ENCODE measurements at regions of chr11 and their contacts with region 1.

Region 1: DNA sequence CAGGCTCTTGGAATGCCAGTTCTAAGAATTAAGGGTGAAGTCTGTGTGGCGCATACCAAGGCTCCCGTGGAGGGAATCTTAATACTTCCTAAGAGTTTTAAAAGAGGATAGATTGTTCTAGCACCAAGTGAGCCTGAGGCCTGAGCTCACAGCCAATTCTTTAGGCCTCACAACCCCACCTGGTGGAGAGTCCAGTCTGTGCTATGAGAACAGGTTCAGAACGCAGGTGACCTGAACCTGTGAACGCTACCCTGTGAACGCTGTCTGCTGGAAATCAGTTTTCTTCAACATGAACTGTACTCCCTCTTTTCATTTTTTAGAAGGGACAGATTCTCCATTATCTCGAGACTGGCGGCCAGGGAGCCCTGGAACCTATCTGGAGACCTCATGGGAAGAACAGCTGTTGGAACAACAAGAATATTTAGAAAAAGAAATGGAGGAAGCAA is 43.2 kb upstream of the DLAT start:
- DNase-seq: peak; percentile 88 to 91
- H3K4me3 ChIP-seq: no peak overlapping the region
- H3K4me3 Mint-ChIP-seq: peak overlapping the region; percentile 53
- H3K27ac Mint-ChIP-seq: peak overlapping the region; percentile 52
- H3K4me1 ChIP-seq: peaks cover 29% of the 10 kb centered on the region
- H3K4me1 Mint-ChIP-seq: peaks cover 30% of the 10 kb centered on the region
- H3K27me3 ChIP-seq: no peaks in the 10 kb centered on the region
- H3K27me3 Mint-ChIP-seq: no peaks in the 10 kb centered on the region
- CTCF ChIP-seq: peak; percentile 95 to 99

Region 2: DNA sequence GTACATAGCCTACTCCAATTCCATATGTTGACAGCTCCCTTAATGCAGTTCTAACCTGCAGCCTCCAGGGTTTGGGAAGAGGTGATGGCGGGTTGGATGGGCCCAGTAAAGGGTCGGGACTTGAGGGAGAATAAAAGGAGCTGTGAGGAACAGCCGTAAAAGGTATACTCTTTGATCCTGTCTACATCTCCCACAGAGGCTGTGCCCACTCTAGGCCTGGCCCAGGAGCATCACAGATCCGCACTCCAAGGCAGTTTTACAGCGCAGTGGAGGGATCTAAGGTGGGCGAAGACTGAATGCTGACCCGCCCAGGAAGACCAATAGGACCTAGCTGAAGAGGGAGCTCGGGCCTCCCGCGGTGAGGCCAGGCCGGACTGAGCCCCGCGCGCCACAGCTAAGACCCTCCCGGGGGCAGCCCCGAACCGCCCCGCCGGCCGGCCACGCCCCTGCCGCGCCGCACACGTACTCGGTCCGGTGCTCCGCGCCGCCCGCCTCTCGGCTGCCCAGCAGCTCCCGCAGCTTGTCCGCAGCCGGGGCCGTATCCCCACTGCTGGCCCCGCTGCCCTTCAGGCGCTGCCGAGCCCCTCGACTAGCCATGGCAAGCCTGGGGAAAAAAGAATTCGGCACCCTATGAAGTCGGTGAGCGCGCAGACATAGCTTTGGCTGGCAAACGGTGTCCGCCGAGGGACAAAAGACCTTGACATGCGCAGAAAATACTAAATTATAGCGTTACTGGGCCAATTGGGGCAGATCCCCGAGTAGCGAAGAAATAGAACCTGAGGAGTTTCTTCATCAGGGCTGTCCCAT is 111.0 kb before region 1 on chr11 and contains the start of gene ALG9:
- CTCF ChIA-PET with region 1: interaction called, 18 read pairs
- POLR2A ChIA-PET with region 1: no interaction called
- intact Hi-C with region 1: no loop called
- DNase-seq: peak; percentile 89 to 94
- H3K4me3 ChIP-seq: peak within 1 kb of the TSS; percentile 94
- H3K4me3 Mint-ChIP-seq: peak within 1 kb of the TSS; percentile 91
- H3K27ac Mint-ChIP-seq: peak within 1 kb of the TSS; percentile 53
- H3K4me1 ChIP-seq: 0 out of 2 replicates have a peak, but pooled peaks cover 3% of the 10 kb centered on the region
- H3K4me1 Mint-ChIP-seq: peaks cover 16% of the 10 kb centered on the region
- H3K27me3 ChIP-seq: no peaks in the 10 kb centered on the region
- H3K27me3 Mint-ChIP-seq: no peaks in the 10 kb centered on the region
- CTCF ChIP-seq: peak; percentile 55 to 63
- total RNA-seq, gene ALG9: 55.3 and 57.4 TPM in 2 replicates

Region 3: DNA sequence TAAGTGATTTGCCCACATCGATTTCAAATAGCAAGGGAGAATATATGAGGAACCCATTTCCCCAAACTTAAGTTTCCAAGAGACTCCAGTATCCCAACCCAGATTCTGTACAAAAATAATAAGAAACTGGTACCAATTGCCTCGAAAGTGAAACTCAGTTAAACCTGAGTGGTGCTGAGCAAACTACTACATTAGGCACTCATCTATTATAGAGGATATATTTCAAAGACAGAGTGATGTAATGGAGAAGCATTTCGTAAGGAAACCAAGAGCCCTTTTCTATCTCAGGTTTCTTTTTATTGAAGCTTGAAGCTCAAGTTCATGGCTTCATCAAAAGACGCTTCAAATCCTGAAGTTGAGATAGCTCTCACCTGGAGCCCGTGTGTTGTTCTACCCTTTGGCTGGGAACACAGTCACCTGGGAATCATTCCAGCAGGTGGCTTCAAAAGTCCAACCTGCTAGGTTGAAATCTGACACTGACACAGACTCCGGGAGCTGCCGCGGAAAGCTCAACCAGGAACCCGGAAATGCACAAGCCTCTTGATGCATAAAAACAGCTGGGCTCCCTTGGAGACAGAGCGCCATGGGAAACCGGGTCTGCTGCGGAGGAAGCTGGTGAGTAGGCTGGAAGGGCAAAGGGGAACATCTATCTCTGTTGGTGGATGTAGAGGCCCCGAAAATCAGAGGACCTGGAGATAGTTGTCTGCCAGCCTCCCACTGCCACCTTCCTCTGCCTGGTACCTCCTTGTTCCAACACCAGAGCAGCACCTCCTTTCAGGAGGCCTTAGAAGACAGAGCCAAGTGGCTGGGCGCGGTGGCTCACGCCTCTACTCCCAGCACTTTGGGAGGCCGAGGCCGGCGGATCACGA is 63.4 kb before region 1 on chr11 and contains the start of gene C11orf52:
- CTCF ChIA-PET with region 1: interaction called, 35 read pairs
- POLR2A ChIA-PET with region 1: no interaction called
- intact Hi-C with region 1: loop called (anchors 1 kb)
- DNase-seq: peak; percentile 92 to 94
- H3K4me3 ChIP-seq: peak within 1 kb of the TSS; percentile 49
- H3K4me3 Mint-ChIP-seq: peak within 1 kb of the TSS; percentile 79
- H3K27ac Mint-ChIP-seq: peak within 1 kb of the TSS; percentile 94
- H3K4me1 ChIP-seq: peaks cover 12% of the 10 kb centered on the region
- H3K4me1 Mint-ChIP-seq: peaks cover 21% of the 10 kb centered on the region
- H3K27me3 ChIP-seq: no peaks in the 10 kb centered on the region
- H3K27me3 Mint-ChIP-seq: no peaks in the 10 kb centered on the region
- CTCF ChIP-seq: peak; percentile 42 to 48
- total RNA-seq, gene C11orf52: 14.4 and 14.8 TPM in 2 replicates

Region 4: DNA sequence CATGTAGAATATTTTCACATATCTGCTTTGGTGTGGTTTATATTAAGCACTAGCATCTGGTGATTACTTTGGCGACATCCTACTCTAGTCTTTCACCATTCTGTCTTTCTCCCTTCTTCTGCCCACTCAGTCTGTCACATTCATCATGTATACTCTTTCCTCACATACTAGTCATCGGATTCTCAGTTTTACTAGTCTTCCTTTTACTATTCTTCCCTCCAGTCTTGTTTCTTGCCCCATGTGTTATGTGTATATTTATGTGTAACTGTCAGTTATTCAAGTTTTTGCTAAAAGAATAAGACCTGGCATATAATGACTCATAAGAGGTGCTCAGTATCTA is 49.5 kb before region 1 on chr11:
- CTCF ChIA-PET with region 1: interaction called, 102 read pairs
- POLR2A ChIA-PET with region 1: interaction called, 3 read pairs
- intact Hi-C with region 1: loop called (anchors 1 kb)
- DNase-seq: no peak
- H3K4me3 ChIP-seq: no peak overlapping the region
- H3K4me3 Mint-ChIP-seq: no peak overlapping the region
- H3K27ac Mint-ChIP-seq: no peak overlapping the region
- H3K4me1 ChIP-seq: peaks cover 17% of the 10 kb centered on the region
- H3K4me1 Mint-ChIP-seq: peaks cover 15% of the 10 kb centered on the region
- H3K27me3 ChIP-seq: no peaks in the 10 kb centered on the region
- H3K27me3 Mint-ChIP-seq: no peaks in the 10 kb centered on the region
- CTCF ChIP-seq: no peak

Region 5: DNA sequence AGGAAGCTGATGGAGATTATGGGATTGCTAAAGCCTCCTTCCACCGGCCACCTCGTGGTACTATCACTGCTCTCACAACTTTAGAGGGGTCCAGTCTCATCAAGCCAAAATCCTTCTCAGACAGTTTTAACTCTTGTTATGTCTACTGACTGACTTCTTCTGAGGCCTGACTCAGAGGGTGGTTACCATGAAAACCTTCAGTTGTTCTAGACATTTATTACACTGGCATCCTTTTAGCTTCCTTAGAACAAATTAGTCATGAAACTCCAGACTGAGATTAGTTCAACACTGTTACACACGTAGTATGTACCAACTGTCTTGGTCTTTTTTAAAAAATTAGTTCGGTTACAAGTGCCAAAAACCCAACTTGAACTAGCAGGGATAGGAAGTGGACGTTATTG is 37.4 kb before region 1 on chr11:
- CTCF ChIA-PET with region 1: interaction called, 16 read pairs
- POLR2A ChIA-PET with region 1: no interaction called
- intact Hi-C with region 1: loop called (anchors 1 kb)
- DNase-seq: no peak
- H3K4me3 ChIP-seq: no peak overlapping the region
- H3K4me3 Mint-ChIP-seq: peak overlapping the region; percentile 51
- H3K27ac Mint-ChIP-seq: peak overlapping the region; percentile 57
- H3K4me1 ChIP-seq: peaks cover 13% of the 10 kb centered on the region
- H3K4me1 Mint-ChIP-seq: peaks cover 13% of the 10 kb centered on the region
- H3K27me3 ChIP-seq: no peaks in the 10 kb centered on the region
- H3K27me3 Mint-ChIP-seq: no peaks in the 10 kb centered on the region
- CTCF ChIP-seq: no peak

Region 6: DNA sequence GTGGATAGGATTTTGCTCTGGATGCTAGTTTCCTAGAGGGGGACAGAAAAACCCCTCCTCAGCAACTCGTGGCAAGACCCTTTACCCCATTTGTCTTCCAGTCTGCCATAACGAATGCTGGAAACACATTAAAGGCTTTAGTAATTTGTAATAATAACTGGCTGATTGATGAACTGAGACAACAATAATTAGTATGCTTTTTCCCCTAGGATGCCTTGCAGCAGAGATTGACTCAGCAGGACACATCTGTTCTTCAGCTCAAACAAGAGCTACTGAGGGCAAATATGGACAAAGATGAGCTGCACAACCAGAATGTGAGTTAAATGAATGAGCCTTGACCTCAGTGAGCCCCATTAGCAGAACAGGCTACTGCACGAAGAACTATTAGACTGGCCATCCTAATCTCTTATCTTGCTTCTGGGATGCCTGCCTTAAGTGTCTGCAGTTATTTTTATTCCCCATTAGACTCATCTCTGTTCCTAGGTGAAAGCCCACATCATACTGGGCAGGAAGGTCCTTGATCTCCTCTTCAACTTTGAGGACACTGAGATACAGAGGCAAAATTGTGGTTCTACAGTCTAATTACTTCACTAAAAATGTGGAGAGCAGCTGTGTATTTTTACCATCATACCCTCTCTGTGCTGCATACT is 10.3 kb after region 1 on chr11:
- CTCF ChIA-PET with region 1: interaction called, 9 read pairs
- POLR2A ChIA-PET with region 1: interaction called, 3 read pairs
- intact Hi-C with region 1: loop called (anchors 1 kb)
- DNase-seq: no peak
- H3K4me3 ChIP-seq: no peak overlapping the region
- H3K4me3 Mint-ChIP-seq: no peak overlapping the region
- H3K27ac Mint-ChIP-seq: no peak overlapping the region
- H3K4me1 ChIP-seq: peaks cover 14% of the 10 kb centered on the region
- H3K4me1 Mint-ChIP-seq: peaks cover 8% of the 10 kb centered on the region
- H3K27me3 ChIP-seq: no peaks in the 10 kb centered on the region
- H3K27me3 Mint-ChIP-seq: no peaks in the 10 kb centered on the region
- CTCF ChIP-seq: no peak

Region 7: GRCh38 chr11:112086422-112087191 is 104.6 kb after region 1 on chr11 and contains the starts of genes SDHD and TIMM8B:
- CTCF ChIA-PET with region 1: no interaction called
- POLR2A ChIA-PET with region 1: no interaction called
- intact Hi-C with region 1: no loop called
- DNase-seq: peak; percentile 99
- H3K4me3 ChIP-seq: peak within 1 kb of the TSS; percentile 59
- H3K4me3 Mint-ChIP-seq: peak within 1 kb of the TSS; percentile 95
- H3K27ac Mint-ChIP-seq: peak within 1 kb of the TSS; percentile 98
- H3K4me1 ChIP-seq: peaks cover 4% of the 10 kb centered on the region; the same call in 1 of the 2 replicates
- H3K4me1 Mint-ChIP-seq: peaks cover 17% of the 10 kb centered on the region
- H3K27me3 ChIP-seq: no peaks in the 10 kb centered on the region
- H3K27me3 Mint-ChIP-seq: no peaks in the 10 kb centered on the region
- CTCF ChIP-seq: peak in 1 of 2 experiments; percentile 73
- total RNA-seq, gene SDHD: 157 and 166 TPM in 2 replicates
- total RNA-seq, gene TIMM8B: 147 and 154 TPM in 2 replicates

Region 8: DNA sequence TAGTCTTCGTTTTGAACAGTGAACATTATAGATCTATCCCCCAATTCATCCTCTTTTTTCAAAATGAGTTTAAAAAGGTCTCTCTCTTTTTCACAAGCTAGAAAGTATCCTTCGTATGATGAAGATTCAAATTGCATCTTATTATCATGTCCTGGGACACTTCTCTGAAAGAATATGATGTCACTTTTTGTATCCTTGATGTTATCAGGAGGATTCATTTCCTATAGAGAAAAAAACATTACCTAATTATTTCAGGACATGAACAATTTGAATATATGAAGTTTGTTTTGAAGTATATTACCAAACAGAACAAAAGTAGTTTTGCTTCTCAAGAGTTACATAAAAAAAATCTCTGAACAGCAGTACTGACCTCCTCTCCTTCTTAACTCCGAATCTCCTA is 161.6 kb after region 1 on chr11:
- CTCF ChIA-PET with region 1: no interaction called
- POLR2A ChIA-PET with region 1: no interaction called
- intact Hi-C with region 1: no loop called
- DNase-seq: no peak
- H3K4me3 ChIP-seq: no peak overlapping the region
- H3K4me3 Mint-ChIP-seq: no peak overlapping the region
- H3K27ac Mint-ChIP-seq: no peak overlapping the region
- H3K4me1 ChIP-seq: no peaks in the 10 kb centered on the region
- H3K4me1 Mint-ChIP-seq: no peaks in the 10 kb centered on the region
- H3K27me3 ChIP-seq: no peaks in the 10 kb centered on the region
- H3K27me3 Mint-ChIP-seq: peaks cover 3% of the 10 kb centered on the region
- CTCF ChIP-seq: no peak

Measured in Caco-2 (cell line).